GM12878 (cell line): ENCODE measurements at regions of chr14 and their contacts with region 1.

Region 1: DNA sequence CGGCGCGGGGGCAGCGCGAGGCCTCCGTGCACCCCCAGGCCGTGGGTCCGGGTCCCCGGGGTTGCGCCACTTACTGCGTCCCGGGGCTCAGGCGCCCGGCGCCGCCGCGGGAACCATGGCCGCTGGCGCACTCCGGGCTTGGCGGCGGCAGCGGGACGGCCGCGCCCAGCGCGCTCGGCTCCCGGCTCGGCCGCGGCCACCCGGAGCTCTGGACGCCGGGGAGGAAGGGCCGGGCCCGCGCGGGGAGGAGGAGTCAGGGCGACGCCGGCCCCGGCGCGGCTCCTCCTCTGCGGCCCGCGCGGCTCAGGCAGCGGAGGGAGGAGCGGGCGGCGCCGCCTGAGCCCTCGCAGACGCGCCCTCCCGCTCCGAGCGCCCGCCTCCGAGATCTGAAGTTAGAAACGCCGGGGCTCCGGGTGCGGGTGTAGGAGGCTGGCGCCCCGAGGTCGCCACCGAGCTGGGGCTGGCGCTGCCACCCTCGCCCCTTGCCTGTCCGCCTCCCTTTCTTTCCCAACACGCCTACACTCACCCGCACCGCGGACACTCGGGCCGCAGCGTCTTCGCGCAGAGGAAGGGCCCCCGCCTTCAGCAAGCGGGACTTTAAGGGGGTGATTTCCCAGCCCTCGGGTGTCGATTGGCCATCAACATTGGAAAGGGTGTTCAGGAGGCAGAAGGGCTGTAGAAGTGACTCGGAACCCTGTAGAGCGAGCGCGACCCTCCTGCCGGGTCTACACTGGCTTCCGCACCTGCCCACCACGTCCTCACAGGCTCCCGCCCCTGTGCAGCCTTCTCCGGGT is at the start of gene NIN:
- DNase-seq: no peak
- ATAC-seq: peak; percentile 89
- H3K4me3 ChIP-seq: peak within 1 kb of the TSS; percentile 96
- H3K27ac ChIP-seq: peak within 1 kb of the TSS; percentile 87
- H3K4me1 ChIP-seq: peaks cover 26% of the 10 kb centered on the region
- H3K27me3 ChIP-seq: no peaks in the 10 kb centered on the region
- CTCF ChIP-seq: no peak
- EP300 ChIP-seq: no peak
- POLR2A ChIP-seq: peak; percentile 72
- RAD21 ChIP-seq: no peak
- polyA plus RNA-seq, gene NIN: 16.2 to 17.0 TPM

Region 2: GRCh38 chr14:50667996-50668825 is 162.9 kb before region 1 on chr14 and contains the start of gene SAV1:
- CTCF ChIA-PET with region 1: no interaction called
- POLR2A ChIA-PET with region 1: no interaction called
- RAD21 ChIA-PET with region 1: interaction called, 10 read pairs
- SMC1A ChIA-PET with region 1: interaction called, 3 read pairs
- in situ Hi-C with region 1: no loop called
- intact Hi-C with region 1: no loop called
- DNase-seq: no peak
- ATAC-seq: peak; percentile 78
- H3K4me3 ChIP-seq: peak within 1 kb of the TSS; percentile 90
- H3K27ac ChIP-seq: peak within 1 kb of the TSS; percentile 30
- H3K4me1 ChIP-seq: no peaks in the 10 kb centered on the region
- H3K27me3 ChIP-seq: no peaks in the 10 kb centered on the region
- CTCF ChIP-seq: no peak
- EP300 ChIP-seq: no peak
- POLR2A ChIP-seq: peak; percentile 84
- RAD21 ChIP-seq: peak; percentile 11; the same call in 1 of the 2 replicates
- polyA plus RNA-seq, gene SAV1: 10.1 to 15.1 TPM

Region 3: DNA sequence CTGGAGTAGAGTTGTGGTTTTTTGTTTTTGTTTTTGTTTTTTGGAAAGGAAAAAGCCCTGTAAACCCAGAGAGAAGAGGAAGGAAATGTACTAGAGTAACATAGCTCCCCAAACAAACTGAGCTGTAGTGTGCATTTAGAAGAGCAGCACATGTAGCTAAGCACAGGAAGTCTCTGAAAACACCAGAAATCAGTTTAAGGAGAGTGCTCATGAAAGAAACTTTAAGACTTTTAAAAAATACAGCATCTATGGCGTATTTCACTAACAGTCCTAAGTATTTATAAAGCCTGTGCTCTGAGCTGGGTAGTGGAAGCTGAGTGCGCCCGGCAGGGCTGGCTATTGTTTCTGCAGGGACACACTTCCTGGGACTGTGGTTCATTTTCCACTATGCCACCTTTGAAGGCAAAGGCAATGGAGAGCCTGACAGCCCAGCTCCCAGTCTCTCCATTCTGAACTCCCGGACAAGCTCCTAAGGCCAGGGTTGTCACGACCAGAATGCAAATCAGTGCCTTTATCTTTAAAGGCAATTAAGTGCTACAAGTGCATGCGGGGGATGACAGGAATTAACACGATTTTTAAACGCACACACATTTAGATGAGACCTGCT is 45.6 kb before region 1 on chr14:
- CTCF ChIA-PET with region 1: interaction called, 76 read pairs
- POLR2A ChIA-PET with region 1: interaction called, 6 read pairs
- RAD21 ChIA-PET with region 1: interaction called, 79 read pairs
- SMC1A ChIA-PET with region 1: interaction called, 360 read pairs
- in situ Hi-C with region 1: no loop called
- intact Hi-C with region 1: loop called (anchors 2 kb)
- DNase-seq: no peak
- ATAC-seq: no peak
- H3K4me3 ChIP-seq: no peak overlapping the region
- H3K27ac ChIP-seq: peak overlapping the region; percentile 5
- H3K4me1 ChIP-seq: peaks cover 59% of the 10 kb centered on the region
- H3K27me3 ChIP-seq: no peaks in the 10 kb centered on the region
- CTCF ChIP-seq: no peak
- EP300 ChIP-seq: no peak
- POLR2A ChIP-seq: no peak
- RAD21 ChIP-seq: no peak

Region 4: DNA sequence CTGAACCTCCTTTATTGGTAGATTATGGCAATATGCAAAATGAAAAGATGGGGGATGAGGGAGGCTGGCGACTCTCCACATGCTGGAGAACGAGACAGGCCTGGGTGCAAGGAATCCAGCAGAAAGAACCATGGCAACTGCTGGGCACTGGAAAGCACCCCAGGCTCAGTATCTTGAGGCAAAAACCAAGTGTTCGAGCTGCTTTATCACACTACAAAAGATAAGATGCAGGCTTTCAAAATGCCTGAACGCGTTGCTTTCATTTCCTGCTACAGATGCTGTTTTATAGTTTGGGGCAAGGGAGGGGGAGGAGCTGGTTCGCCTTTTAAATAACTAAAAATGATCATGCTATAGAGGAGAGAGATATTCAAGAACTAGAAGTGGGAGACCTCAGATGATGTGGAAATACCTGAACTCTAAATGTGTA is 39.1 kb before region 1 on chr14:
- CTCF ChIA-PET with region 1: interaction called, 76 read pairs
- POLR2A ChIA-PET with region 1: interaction called, 9 read pairs
- RAD21 ChIA-PET with region 1: interaction called, 79 read pairs
- SMC1A ChIA-PET with region 1: interaction called, 360 read pairs
- in situ Hi-C with region 1: no loop called
- intact Hi-C with region 1: loop called (anchors 2 kb)
- DNase-seq: no peak
- ATAC-seq: peak; percentile 37
- H3K4me3 ChIP-seq: peak overlapping the region; percentile 65
- H3K27ac ChIP-seq: peak overlapping the region; percentile 97
- H3K4me1 ChIP-seq: peaks cover 95% of the 10 kb centered on the region
- H3K27me3 ChIP-seq: no peaks in the 10 kb centered on the region
- CTCF ChIP-seq: no peak
- EP300 ChIP-seq: no peak
- POLR2A ChIP-seq: peak; percentile 33; the same call in 1 of the 2 replicates
- RAD21 ChIP-seq: no peak

Region 5: GRCh38 chr14:50798048-50798421 is 33.1 kb before region 1 on chr14:
- CTCF ChIA-PET with region 1: interaction called, 76 read pairs
- POLR2A ChIA-PET with region 1: interaction called, 9 read pairs
- RAD21 ChIA-PET with region 1: interaction called, 79 read pairs
- SMC1A ChIA-PET with region 1: interaction called, 360 read pairs
- in situ Hi-C with region 1: no loop called
- intact Hi-C with region 1: no loop called
- DNase-seq: peak; percentile 42
- ATAC-seq: peak; percentile 98
- H3K4me3 ChIP-seq: no peak overlapping the region; the same call in 1 of the 2 replicates
- H3K27ac ChIP-seq: peak overlapping the region; percentile 36
- H3K4me1 ChIP-seq: peaks cover 55% of the 10 kb centered on the region
- H3K27me3 ChIP-seq: no peaks in the 10 kb centered on the region
- CTCF ChIP-seq: no peak
- EP300 ChIP-seq: 0 out of 4 replicates have a peak, but pooled peaks have one; percentile 17 to 44
- POLR2A ChIP-seq: 0 out of 2 replicates have a peak, but pooled peaks have one; percentile 28
- RAD21 ChIP-seq: no peak

Region 6: GRCh38 chr14:50813544-50813863 is 17.6 kb before region 1 on chr14:
- CTCF ChIA-PET with region 1: interaction called, 4 read pairs
- POLR2A ChIA-PET with region 1: interaction called, 5 read pairs
- RAD21 ChIA-PET with region 1: interaction called, 13 read pairs
- SMC1A ChIA-PET with region 1: interaction called, 43 read pairs
- in situ Hi-C with region 1: no loop called
- intact Hi-C with region 1: no loop called
- DNase-seq: peak; percentile 38
- ATAC-seq: peak; percentile 88
- H3K4me3 ChIP-seq: peak overlapping the region; percentile 51
- H3K27ac ChIP-seq: peak overlapping the region; percentile 80
- H3K4me1 ChIP-seq: peaks cover 18% of the 10 kb centered on the region
- H3K27me3 ChIP-seq: no peaks in the 10 kb centered on the region
- CTCF ChIP-seq: no peak
- EP300 ChIP-seq: no peak
- POLR2A ChIP-seq: no peak
- RAD21 ChIP-seq: no peak